Activated CD4-positive, alpha-beta T cell treated with anti-CD3 and anti-CD28 coated beads for 36 hours (primary cell): ENCODE measurements at regions of chr13 and their contacts with region 1.

Region 1: DNA sequence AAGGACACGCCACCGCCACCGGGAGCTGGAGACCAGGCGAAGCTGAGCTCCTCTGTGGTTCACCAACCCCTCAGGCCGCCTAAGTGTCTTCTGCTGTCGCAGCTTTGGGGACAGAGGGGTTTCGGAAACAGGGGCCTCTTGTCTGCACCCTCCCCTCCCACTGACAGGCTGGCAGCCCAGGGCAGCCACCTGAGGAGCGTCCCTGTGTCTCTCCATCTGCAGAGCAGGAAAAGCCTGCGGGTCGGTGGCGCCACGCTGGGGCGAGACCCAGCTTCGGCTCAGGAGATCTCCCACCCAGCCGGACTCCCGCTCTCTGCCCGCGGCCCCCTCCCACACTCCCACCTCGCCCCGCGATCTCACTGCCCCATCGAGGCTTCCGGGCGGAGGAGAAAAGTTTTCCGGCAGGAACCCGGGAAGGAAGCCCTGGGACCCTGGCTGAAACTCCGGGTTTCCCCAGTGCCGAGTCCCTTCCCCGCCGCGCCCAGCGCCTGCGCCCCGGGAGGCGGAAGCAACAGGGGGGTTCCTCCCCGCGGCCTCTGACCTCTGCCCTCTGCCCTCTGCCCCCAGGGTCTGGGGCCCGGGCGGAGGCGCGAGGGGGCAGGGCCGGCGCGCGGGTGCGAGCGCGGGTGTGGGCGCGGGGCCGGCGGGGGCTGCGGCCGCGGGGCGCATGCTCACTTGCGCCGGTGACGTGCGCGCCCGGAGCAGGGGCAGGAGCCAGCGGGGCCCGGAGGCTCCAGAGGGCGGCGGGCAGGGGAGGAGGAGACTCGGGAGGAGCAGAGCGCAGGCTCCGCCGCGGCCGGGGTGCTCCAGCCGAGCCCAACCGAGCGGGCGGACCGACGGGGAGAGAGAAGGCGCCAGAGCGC is at the start of gene ATP11A:
- DNase-seq: peak; percentile 90
- ATAC-seq: peak; percentile 84
- H3K4me3 Mint-ChIP-seq: peak within 1 kb of the TSS; percentile 84
- H3K27ac Mint-ChIP-seq: peak within 1 kb of the TSS; percentile 91
- H3K4me1 Mint-ChIP-seq: peaks cover 49% of the 10 kb centered on the region
- H3K27me3 Mint-ChIP-seq: no peaks in the 10 kb centered on the region
- total RNA-seq, gene ATP11A: 42.1 to 50.7 TPM

Region 2: GRCh38 chr13:112587212-112587763 is 102.2 kb before region 1 on chr13:
- CTCF ChIA-PET with region 1: no interaction called
- POLR2A ChIA-PET with region 1: no interaction called
- intact Hi-C with region 1: loop called in 1 of 2 experiments (anchors 1 kb)
- DNase-seq: peak; percentile 84
- ATAC-seq: peak; percentile 79
- H3K4me3 Mint-ChIP-seq: peak overlapping the region; percentile 96
- H3K27ac Mint-ChIP-seq: peak overlapping the region; percentile 97
- H3K4me1 Mint-ChIP-seq: peaks cover 46% of the 10 kb centered on the region
- H3K27me3 Mint-ChIP-seq: no peaks in the 10 kb centered on the region

Region 3: DNA sequence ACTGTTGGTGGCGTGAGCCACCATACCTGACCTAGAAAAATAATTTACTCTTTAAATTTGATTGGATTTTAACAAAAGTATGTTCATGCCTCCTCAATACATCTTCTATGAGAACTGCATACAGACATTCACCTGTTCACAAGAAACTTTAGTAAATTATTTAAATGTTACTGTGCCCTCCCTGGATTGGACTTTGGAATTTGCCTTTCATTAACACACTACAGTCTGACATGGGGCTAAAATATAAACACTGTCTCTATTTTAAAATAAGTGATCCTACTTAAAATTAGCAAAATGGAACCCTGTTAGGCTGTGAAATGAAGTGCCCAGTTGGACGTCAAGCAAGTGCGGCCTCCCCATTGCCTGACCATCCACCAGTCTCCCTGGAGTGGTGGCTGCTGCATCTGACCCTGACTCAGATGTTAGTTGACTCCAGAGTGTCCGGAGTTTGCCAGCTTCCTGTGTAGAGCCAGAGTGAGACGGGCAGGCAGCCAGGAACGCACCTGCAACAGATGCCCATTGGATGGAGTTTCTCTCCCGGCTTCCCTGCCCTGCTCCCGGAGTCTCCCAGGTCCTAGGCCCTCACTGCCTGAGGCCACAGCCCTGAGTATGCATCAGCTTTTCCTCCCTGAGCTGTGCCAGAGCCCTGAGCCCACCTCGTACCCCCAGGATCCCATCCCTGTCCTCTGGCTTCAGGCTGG is 45.6 kb before region 1 on chr13:
- CTCF ChIA-PET with region 1: interaction called, 5 read pairs
- POLR2A ChIA-PET with region 1: no interaction called
- intact Hi-C with region 1: loop called (anchors 1 to 5 kb)
- DNase-seq: no peak
- ATAC-seq: no peak
- H3K4me3 Mint-ChIP-seq: no peak overlapping the region
- H3K27ac Mint-ChIP-seq: no peak overlapping the region
- H3K4me1 Mint-ChIP-seq: peaks cover 11% of the 10 kb centered on the region
- H3K27me3 Mint-ChIP-seq: peaks cover 8% of the 10 kb centered on the region

Region 4: GRCh38 chr13:112752711-112753541 is 63.4 kb after region 1 on chr13:
- CTCF ChIA-PET with region 1: no interaction called
- POLR2A ChIA-PET with region 1: no interaction called
- intact Hi-C with region 1: loop called in 1 of 2 experiments (anchors 2 kb)
- DNase-seq: peak; percentile 61
- ATAC-seq: peak; percentile 97
- H3K4me3 Mint-ChIP-seq: peak overlapping the region; percentile 9
- H3K27ac Mint-ChIP-seq: peak overlapping the region; percentile 70
- H3K4me1 Mint-ChIP-seq: peaks cover 14% of the 10 kb centered on the region
- H3K27me3 Mint-ChIP-seq: no peaks in the 10 kb centered on the region

Region 5: DNA sequence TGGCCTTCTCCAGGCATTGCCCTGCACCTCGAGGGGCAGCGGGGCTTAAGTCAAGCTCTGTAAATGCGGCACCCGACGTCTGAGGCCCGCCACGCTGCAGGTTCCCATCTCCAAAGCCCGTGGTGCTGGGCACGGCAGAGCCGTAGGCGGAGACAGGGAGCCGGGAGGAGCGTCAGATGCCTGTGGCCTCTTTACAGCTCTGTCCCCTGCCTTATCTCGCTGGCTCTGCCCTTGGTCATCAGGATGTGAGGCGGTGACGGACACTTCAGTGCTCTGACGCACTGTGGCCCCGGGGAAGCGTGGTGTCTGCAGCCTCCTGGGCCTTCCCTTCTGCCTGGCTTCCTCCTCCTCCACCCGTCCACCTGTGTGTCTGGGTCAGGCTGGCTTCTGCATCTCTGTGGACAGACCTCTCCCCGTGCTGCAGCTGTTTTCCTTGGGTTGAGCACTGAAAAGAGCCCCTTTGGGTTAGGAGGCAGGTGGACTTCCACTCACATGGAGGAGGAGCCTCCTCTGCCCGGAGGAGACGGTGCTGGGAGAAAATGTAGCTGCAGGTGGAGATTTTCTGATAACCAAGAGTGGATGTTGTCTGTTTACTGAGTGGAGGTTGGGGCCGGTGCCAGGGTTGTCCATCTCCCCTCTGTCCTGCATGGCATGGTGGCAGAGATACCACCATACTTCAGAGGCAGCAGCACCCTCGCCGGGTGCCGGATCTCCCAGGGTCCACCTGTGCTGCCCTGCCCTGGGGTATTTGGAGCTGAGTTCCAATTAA is 294.1 kb after region 1 on chr13:
- CTCF ChIA-PET with region 1: no interaction called
- POLR2A ChIA-PET with region 1: no interaction called
- intact Hi-C with region 1: no loop called
- DNase-seq: no peak
- ATAC-seq: no peak
- H3K4me3 Mint-ChIP-seq: no peak overlapping the region
- H3K27ac Mint-ChIP-seq: no peak overlapping the region
- H3K4me1 Mint-ChIP-seq: peaks cover 2% of the 10 kb centered on the region
- H3K27me3 Mint-ChIP-seq: no peaks in the 10 kb centered on the region

Region 6: DNA sequence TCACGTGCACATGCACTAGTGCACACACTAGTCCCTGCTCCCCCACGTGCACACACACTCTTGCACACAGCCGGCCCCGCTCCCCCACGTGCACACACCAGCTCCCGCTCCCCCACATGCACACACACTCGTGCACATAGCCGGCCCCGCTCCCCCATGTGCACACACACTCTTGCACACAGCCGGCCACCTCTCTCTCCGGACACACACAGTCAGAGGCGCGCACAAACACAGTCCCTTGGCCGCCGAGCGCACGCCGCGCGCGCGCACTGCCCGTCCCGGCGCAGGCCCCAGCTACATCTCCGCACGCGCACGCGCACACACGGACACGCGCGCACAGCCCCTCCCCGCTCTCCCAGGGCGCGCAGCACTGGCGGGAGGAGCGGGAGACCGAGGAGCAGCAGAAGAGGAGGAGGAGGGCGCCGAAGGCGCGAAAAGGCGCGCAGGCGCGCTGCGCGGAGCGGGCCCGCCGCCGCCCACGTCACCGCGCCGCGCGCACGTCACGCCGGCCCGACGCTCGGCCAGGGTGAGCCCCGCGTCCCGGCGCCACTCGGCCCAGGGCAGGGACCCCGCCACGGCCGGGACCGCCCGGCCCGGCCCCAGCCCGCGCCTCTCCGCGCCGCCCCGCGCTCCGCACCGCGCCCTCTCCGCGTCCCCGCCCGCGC is 894.8 kb after region 1 on chr13 and contains the start of gene TFDP1:
- CTCF ChIA-PET with region 1: no interaction called
- POLR2A ChIA-PET with region 1: no interaction called
- intact Hi-C with region 1: loop called in 1 of 2 experiments (anchors 1 kb)
- DNase-seq: peak; percentile 93
- ATAC-seq: peak; percentile 92
- H3K4me3 Mint-ChIP-seq: peak within 1 kb of the TSS; percentile 90
- H3K27ac Mint-ChIP-seq: peak within 1 kb of the TSS; percentile 80
- H3K4me1 Mint-ChIP-seq: peaks cover 36% of the 10 kb centered on the region
- H3K27me3 Mint-ChIP-seq: no peaks in the 10 kb centered on the region
- total RNA-seq, gene TFDP1: 159 to 175 TPM